ENCODE measurements at regions of chr18 and their contacts with region 1.

Region 1: GRCh38 chr18:32470713-32471633 is at the start of gene GAREM1:
- DNase-seq: peak; percentile 97
- H3K4me3 ChIP-seq: peak within 1 kb of the TSS; percentile 77
- H3K27ac ChIP-seq: no peak within 1 kb of the TSS
- H3K4me1 ChIP-seq: peaks cover 5% of the 10 kb centered on the region
- H3K27me3 ChIP-seq: no peaks in the 10 kb centered on the region
- CTCF ChIP-seq: peak; percentile 67
- total RNA-seq, gene GAREM1: 8.4 and 9.5 TPM in 2 replicates

Region 2: GRCh38 chr18:32158108-32158624 is 312.8 kb before region 1 on chr18:
- CTCF ChIA-PET with region 1: interaction called, 15 read pairs
- POLR2A ChIA-PET with region 1: no interaction called
- intact Hi-C with region 1: loop called (anchors 1 kb)
- DNase-seq: peak; percentile 94
- H3K4me3 ChIP-seq: peak overlapping the region; percentile 29
- H3K27ac ChIP-seq: no peak overlapping the region
- H3K4me1 ChIP-seq: peaks cover 7% of the 10 kb centered on the region
- H3K27me3 ChIP-seq: no peaks in the 10 kb centered on the region
- CTCF ChIP-seq: peak; percentile 92

Region 3: DNA sequence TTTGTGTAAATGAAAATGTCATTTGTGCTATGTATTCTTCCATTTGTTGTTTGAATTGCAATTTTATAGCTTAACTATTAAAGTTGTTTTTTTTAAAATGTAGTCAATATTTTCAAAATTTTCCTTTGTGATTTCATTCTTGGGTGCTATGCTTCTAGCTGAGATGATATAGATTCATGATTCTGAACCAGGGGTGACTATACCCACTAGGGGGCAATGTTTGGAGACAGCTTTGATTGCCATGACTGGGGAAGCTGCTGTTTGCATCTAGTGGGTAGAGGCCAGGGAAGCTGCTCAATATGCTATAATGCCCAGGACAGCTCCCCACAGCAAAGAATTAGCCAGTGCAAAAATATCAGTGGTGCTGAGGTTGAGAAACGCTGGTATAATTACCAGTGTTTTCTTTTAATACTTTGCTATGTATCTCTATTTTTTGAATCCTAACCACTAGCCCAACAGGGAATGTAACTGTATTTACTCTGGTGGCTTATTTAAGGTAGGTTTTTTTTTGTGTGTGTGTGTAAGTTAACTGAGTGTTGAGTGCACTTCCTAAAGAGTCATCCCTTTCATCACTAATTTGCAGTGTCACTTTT is 181.4 kb before region 1 on chr18:
- CTCF ChIA-PET with region 1: interaction called, 28 read pairs
- POLR2A ChIA-PET with region 1: no interaction called
- intact Hi-C with region 1: loop called (anchors 1 kb)
- DNase-seq: peak; percentile 85
- H3K4me3 ChIP-seq: no peak overlapping the region
- H3K27ac ChIP-seq: no peak overlapping the region
- H3K4me1 ChIP-seq: no peaks in the 10 kb centered on the region
- H3K27me3 ChIP-seq: no peaks in the 10 kb centered on the region
- CTCF ChIP-seq: peak; percentile 86

Region 4: GRCh38 chr18:32552421-32553030 is 81.6 kb after region 1 on chr18:
- CTCF ChIA-PET with region 1: interaction called, 4 read pairs
- POLR2A ChIA-PET with region 1: no interaction called
- intact Hi-C with region 1: loop called (anchors 5 kb)
- DNase-seq: peak; percentile 79
- H3K4me3 ChIP-seq: no peak overlapping the region
- H3K27ac ChIP-seq: no peak overlapping the region
- H3K4me1 ChIP-seq: no peaks in the 10 kb centered on the region
- H3K27me3 ChIP-seq: no peaks in the 10 kb centered on the region
- CTCF ChIP-seq: peak; percentile 79